ENCODE measurements at regions of chr10 and their contacts with region 1.

Region 1: GRCh38 chr10:114103284-114103683 is 59.6 kb downstream of the ADRB1 start:
- DNase-seq: no peak
- ATAC-seq: peak; percentile 68 to 90 (median 86)
- H3K4me3 ChIP-seq: no peak overlapping the region
- H3K27ac ChIP-seq: no peak overlapping the region
- H3K4me1 ChIP-seq: no peaks in the 10 kb centered on the region
- H3K27me3 ChIP-seq: no peaks in the 10 kb centered on the region
- CTCF ChIP-seq: peak; percentile 21 to 39 (median 24)

Region 2: GRCh38 chr10:113704637-113705343 is 398.5 kb before region 1 on chr10:
- intact Hi-C with region 1: loop called in 2 of 3 experiments (anchors 5 to 10 kb)
- DNase-seq: no peak
- ATAC-seq: peak in 3 of 4 donors; percentile 73 to 76 (median 74)
- H3K4me3 ChIP-seq: no peak overlapping the region
- H3K27ac ChIP-seq: no peak overlapping the region
- H3K4me1 ChIP-seq: peaks cover 6 to 19% (median 8%) of the 10 kb centered on the region in 3 donors
- H3K27me3 ChIP-seq: no peaks in the 10 kb centered on the region
- CTCF ChIP-seq: peak; percentile 19 to 47 (median 36)

Region 3: GRCh38 chr10:113808168-113808567 is 295.1 kb before region 1 on chr10:
- intact Hi-C with region 1: loop called in 2 of 3 experiments (anchors 5 kb)
- DNase-seq: no peak
- ATAC-seq: no peak
- H3K4me3 ChIP-seq: no peak overlapping the region
- H3K27ac ChIP-seq: no peak overlapping the region
- H3K4me1 ChIP-seq: no peaks in the 10 kb centered on the region
- H3K27me3 ChIP-seq: no peaks in the 10 kb centered on the region
- CTCF ChIP-seq: no peak

Region 4: GRCh38 chr10:114234132-114234531 is 130.8 kb after region 1 on chr10:
- intact Hi-C with region 1: no loop called
- DNase-seq: no peak
- ATAC-seq: no peak
- H3K4me3 ChIP-seq: no peak overlapping the region
- H3K27ac ChIP-seq: no peak overlapping the region
- H3K4me1 ChIP-seq: peaks cover 0 to 7% (median 6%) of the 10 kb centered on the region in 3 donors
- H3K27me3 ChIP-seq: no peaks in the 10 kb centered on the region
- CTCF ChIP-seq: no peak

Region 5: DNA sequence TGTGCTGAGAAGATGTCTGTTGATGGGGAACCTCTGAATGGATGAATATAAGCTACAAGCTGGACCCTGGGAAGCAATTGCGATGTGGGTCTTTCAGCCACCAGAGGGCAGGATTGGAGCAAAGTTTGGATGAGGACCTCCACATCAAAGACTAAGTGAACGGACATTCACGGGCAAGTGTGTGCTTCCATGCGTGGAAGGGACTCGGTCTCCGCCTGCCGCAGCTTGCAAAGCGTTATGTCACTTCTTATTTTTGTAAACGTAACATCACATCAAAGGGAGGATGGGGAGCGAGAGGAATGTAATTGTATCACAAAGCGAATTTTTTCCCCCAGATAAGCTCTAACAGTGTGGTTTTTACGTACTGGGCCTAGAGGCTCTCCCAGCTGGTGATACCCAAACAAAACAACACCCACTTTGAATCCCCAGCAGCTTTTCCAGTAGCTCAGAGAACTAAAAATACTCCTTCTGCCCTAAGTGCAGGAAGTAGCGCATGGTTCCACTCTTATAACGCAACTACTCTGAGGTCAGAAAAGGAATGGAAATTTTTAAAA is 200.8 kb after region 1 on chr10:
- intact Hi-C with region 1: no loop called
- DNase-seq: peak in 5 of 6 donors; percentile 59 to 84 (median 74)
- ATAC-seq: peak; percentile 87 to 95 (median 91)
- H3K4me3 ChIP-seq: peak overlapping the region in 2 of 4 donors; percentile 30 to 38
- H3K27ac ChIP-seq: no peak overlapping the region
- H3K4me1 ChIP-seq: no peaks in the 10 kb centered on the region
- H3K27me3 ChIP-seq: no peaks in the 10 kb centered on the region
- CTCF ChIP-seq: peak; percentile 66 to 74 (median 70)

Measured in pancreas (tissue), 10 donors.